ENCODE measurements at regions of chr12 and their contacts with region 1.

Region 1: GRCh38 chr12:111841750-111842555 is at the start of gene MAPKAPK5:
- DNase-seq: peak; percentile 96 to 100 (median 98)
- ATAC-seq: peak; percentile 87
- H3K4me3 ChIP-seq: peak within 1 kb of the TSS; percentile 79 to 91
- H3K4me3 Mint-ChIP-seq: peak within 1 kb of the TSS; percentile 98
- H3K27ac ChIP-seq: peak within 1 kb of the TSS; percentile 82 to 91
- H3K27ac Mint-ChIP-seq: peak within 1 kb of the TSS; percentile 99
- H3K4me1 ChIP-seq: peaks cover 42% of the 10 kb centered on the region
- H3K4me1 Mint-ChIP-seq: peaks cover 64% of the 10 kb centered on the region
- H3K27me3 ChIP-seq: no peaks in the 10 kb centered on the region
- H3K27me3 Mint-ChIP-seq: no peaks in the 10 kb centered on the region
- CTCF ChIP-seq: no peak
- total RNA-seq, gene MAPKAPK5: 65.6 to 68.0 TPM

Region 2: DNA sequence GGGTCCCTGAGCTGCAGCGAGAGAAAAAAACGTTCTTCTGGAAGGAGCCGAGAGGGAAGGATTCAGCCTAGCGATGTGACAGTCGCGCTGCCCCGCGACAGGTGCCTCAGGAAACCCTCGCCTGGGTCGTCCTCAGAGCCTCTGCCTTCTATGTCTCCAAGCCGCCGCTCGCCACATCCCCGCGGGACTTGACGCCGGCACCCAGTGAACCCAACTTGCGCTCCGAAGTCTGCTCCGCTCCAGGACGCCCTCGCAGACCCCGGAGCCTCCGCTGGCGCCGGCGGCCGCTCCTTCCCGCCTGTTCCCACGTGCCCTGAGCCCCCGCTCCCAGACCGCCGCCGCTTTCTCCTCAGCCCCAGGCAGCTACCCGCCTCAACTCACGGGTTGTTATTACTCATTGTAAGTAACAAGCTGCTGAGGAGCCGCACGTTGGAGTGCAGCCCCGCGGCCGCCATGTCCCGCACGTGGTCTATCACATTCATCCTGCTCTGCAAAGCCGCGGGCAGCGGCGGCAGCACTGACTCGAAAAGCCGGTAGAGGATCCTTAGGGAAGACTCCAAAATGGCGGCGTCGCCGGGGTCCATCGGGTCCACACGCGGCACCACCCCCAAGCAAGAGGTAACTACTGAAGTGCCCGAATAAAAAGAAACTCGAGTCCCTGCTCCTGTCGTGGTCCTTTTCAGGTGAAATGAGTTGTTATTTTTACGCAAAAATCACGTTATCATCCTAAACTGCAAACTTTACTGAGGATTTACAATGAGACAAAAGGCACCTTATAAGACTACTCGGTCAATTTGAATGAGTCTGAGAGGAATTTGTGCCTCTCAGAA is 1438.6 kb before region 1 on chr12 and contains the start of gene ANAPC7:
- CTCF ChIA-PET with region 1: no interaction called
- POLR2A ChIA-PET with region 1: no interaction called
- intact Hi-C with region 1: loop called in 1 of 2 experiments (anchors 1 kb)
- DNase-seq: peak; percentile 69 to 93 (median 87)
- ATAC-seq: peak; percentile 96
- H3K4me3 ChIP-seq: peak within 1 kb of the TSS; percentile 87 to 89
- H3K4me3 Mint-ChIP-seq: peak within 1 kb of the TSS; percentile 100
- H3K27ac ChIP-seq: peak within 1 kb of the TSS; percentile 78 to 96
- H3K27ac Mint-ChIP-seq: peak within 1 kb of the TSS; percentile 98
- H3K4me1 ChIP-seq: peaks cover 20% of the 10 kb centered on the region
- H3K4me1 Mint-ChIP-seq: peaks cover 33% of the 10 kb centered on the region
- H3K27me3 ChIP-seq: no peaks in the 10 kb centered on the region
- H3K27me3 Mint-ChIP-seq: no peaks in the 10 kb centered on the region
- CTCF ChIP-seq: no peak
- total RNA-seq, gene ANAPC7: 22.1 to 23.2 TPM

Region 3: DNA sequence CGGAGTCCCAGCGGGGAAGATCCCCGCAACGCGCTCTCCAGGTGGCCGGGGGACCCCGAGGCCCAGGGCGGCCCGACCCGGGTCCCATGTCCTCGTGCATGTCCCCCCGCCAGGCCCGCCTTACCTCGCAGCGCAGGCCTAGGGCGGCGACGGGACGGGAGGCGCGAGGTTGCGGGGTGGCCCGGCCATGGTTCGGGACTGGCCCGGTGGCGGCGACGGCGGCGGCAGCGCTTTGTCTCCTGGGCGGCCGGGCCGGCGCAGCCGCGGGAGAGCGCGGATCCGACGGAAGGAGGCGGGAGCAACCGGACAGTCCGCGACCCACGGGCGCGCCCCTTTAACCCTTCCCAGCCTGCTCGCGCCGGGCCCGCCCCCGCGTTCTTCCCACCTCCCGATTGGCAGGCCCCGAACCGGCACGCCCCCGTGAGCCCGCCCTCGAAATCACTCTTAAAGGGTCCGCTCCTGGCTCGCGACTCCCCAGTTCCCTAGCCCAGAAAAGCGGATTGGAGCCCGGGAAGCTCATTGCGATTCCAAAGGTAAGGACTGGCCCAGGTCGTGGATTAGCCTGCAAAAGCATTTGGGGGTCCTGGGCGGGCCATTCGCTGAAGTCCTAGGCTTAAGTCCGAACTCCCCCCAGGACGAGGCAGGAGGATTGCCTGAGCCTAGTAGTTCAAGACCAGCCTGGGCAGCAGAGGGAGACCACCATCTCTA is 473.0 kb before region 1 on chr12 and contains the start of gene PHETA1:
- CTCF ChIA-PET with region 1: no interaction called
- POLR2A ChIA-PET with region 1: no interaction called
- intact Hi-C with region 1: loop called in 1 of 2 experiments (anchors 5 kb)
- DNase-seq: peak; percentile 41 to 83 (median 73)
- ATAC-seq: peak; percentile 94
- H3K4me3 ChIP-seq: peak within 1 kb of the TSS; percentile 64 to 66
- H3K4me3 Mint-ChIP-seq: peak within 1 kb of the TSS; percentile 87
- H3K27ac ChIP-seq: no peak within 1 kb of the TSS
- H3K27ac Mint-ChIP-seq: peak within 1 kb of the TSS; percentile 37
- H3K4me1 ChIP-seq: peaks cover 20% of the 10 kb centered on the region
- H3K4me1 Mint-ChIP-seq: peaks cover 23% of the 10 kb centered on the region
- H3K27me3 ChIP-seq: no peaks in the 10 kb centered on the region
- H3K27me3 Mint-ChIP-seq: peaks cover 2% of the 10 kb centered on the region
- CTCF ChIP-seq: no peak
- total RNA-seq, gene PHETA1: 0.79 to 0.83 TPM

Region 4: DNA sequence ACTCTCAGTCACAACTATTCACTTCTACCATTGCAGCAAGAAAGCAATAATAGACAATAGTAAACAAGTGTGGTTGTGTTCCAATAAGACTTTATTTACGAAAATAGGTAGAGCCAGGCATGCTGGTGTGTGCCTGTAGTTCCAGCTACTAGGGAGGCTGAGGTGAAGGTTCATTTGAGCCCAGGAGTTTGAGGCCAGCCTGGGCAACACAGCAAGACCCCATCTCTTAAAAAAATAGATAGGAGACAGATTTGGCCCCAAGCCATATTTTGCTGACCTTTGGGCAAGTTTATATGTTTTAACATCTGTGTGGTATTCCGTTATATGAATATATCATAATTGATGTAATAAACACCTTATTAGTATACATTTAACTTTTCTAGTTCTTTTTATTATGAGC is 142.0 kb before region 1 on chr12:
- CTCF ChIA-PET with region 1: no interaction called
- POLR2A ChIA-PET with region 1: no interaction called
- intact Hi-C with region 1: no loop called
- DNase-seq: no peak
- ATAC-seq: no peak
- H3K4me3 ChIP-seq: no peak overlapping the region
- H3K4me3 Mint-ChIP-seq: no peak overlapping the region
- H3K27ac ChIP-seq: no peak overlapping the region
- H3K27ac Mint-ChIP-seq: no peak overlapping the region
- H3K4me1 ChIP-seq: no peaks in the 10 kb centered on the region
- H3K4me1 Mint-ChIP-seq: no peaks in the 10 kb centered on the region
- H3K27me3 ChIP-seq: no peaks in the 10 kb centered on the region
- H3K27me3 Mint-ChIP-seq: no peaks in the 10 kb centered on the region
- CTCF ChIP-seq: no peak

Region 5: GRCh38 chr12:111823891-111824290 is 18.1 kb before region 1 on chr12:
- CTCF ChIA-PET with region 1: no interaction called
- POLR2A ChIA-PET with region 1: no interaction called
- intact Hi-C with region 1: loop called in 1 of 2 experiments (anchors 1 kb)
- DNase-seq: no peak
- ATAC-seq: no peak
- H3K4me3 ChIP-seq: no peak overlapping the region
- H3K4me3 Mint-ChIP-seq: no peak overlapping the region
- H3K27ac ChIP-seq: no peak overlapping the region
- H3K27ac Mint-ChIP-seq: no peak overlapping the region
- H3K4me1 ChIP-seq: no peaks in the 10 kb centered on the region
- H3K4me1 Mint-ChIP-seq: no peaks in the 10 kb centered on the region
- H3K27me3 ChIP-seq: no peaks in the 10 kb centered on the region
- H3K27me3 Mint-ChIP-seq: peaks cover 10% of the 10 kb centered on the region
- CTCF ChIP-seq: no peak

Region 6: DNA sequence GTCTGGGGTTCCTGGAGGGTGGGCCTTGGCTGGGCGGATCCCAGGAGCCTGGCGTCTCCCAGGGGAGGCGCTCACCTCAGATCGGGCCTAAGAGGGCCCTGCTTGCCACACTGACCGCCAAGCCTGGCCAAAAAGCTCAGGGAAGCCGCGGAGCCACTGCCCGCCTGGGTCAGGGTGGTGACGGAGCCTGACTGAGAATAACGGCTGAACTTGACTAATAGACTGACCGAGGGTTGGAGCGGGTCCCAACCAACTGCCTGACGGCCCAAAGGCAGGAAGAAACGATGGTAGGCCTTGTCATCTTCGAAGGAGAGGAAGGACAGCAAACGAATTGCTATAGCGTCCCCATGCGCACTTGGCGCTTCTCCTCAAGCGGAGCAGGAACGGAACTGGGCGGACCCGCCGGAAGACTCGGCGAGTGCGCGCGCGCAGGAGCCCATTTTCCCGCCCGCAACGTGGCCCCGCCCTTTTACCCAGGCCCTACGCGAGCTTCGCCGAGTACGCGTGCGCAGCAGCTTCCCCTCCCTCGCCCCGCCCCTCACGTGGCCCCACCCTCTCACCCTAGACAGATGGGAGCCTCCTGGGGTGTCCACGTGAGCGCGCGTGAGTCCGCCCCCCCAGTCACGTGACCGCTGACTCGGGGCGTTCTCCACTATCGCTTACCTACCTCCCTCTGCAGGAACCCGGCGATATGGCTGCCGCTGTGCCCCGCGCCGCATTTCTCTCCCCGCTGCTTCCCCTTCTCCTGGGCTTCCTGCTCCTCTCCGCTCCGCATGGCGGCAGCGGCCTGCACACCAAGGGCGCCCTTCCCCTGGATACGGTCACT is 171.0 kb after region 1 on chr12 and contains the starts of genes ERP29 and TMEM116:
- CTCF ChIA-PET with region 1: no interaction called
- POLR2A ChIA-PET with region 1: interaction called, 5 read pairs
- intact Hi-C with region 1: loop called (anchors 1 to 2 kb)
- DNase-seq: peak; percentile 99 to 100 (median 100)
- ATAC-seq: peak; percentile 82
- H3K4me3 ChIP-seq: peak within 1 kb of the TSS; percentile 94
- H3K4me3 Mint-ChIP-seq: peak within 1 kb of the TSS; percentile 88
- H3K27ac ChIP-seq: peak within 1 kb of the TSS; percentile 95
- H3K27ac Mint-ChIP-seq: peak within 1 kb of the TSS; percentile 99
- H3K4me1 ChIP-seq: peaks cover 43% of the 10 kb centered on the region
- H3K4me1 Mint-ChIP-seq: peaks cover 59% of the 10 kb centered on the region
- H3K27me3 ChIP-seq: no peaks in the 10 kb centered on the region
- H3K27me3 Mint-ChIP-seq: no peaks in the 10 kb centered on the region
- CTCF ChIP-seq: peak; percentile 66
- total RNA-seq, gene ERP29: 102 to 111 TPM
- total RNA-seq, gene TMEM116: 9.4 to 11.2 TPM

Region 7: GRCh38 chr12:112382232-112382796 is 540.4 kb after region 1 on chr12 and contains the start of gene HECTD4:
- CTCF ChIA-PET with region 1: interaction called, 6 read pairs
- POLR2A ChIA-PET with region 1: no interaction called
- intact Hi-C with region 1: loop called (anchors 1 to 2 kb)
- DNase-seq: peak; percentile 77 to 96 (median 93)
- ATAC-seq: peak; percentile 98
- H3K4me3 ChIP-seq: peak within 1 kb of the TSS; percentile 72 to 83
- H3K4me3 Mint-ChIP-seq: peak within 1 kb of the TSS; percentile 95
- H3K27ac ChIP-seq: peak within 1 kb of the TSS; percentile 43 to 68
- H3K27ac Mint-ChIP-seq: peak within 1 kb of the TSS; percentile 88
- H3K4me1 ChIP-seq: peaks cover 13% of the 10 kb centered on the region
- H3K4me1 Mint-ChIP-seq: peaks cover 25% of the 10 kb centered on the region
- H3K27me3 ChIP-seq: no peaks in the 10 kb centered on the region
- H3K27me3 Mint-ChIP-seq: peaks cover under 1% of the 10 kb centered on the region
- CTCF ChIP-seq: no peak
- total RNA-seq, gene HECTD4: 31.8 to 39.6 TPM